PC-9 (cell line): ENCODE measurements at regions of chr4 and their contacts with region 1.

Region 1: GRCh38 chr4:111631215-111631999 is 513.8 kb upstream of the FAM241A start:
- DNase-seq: no peak
- H3K4me3 ChIP-seq: no peak overlapping the region
- H3K27ac ChIP-seq: no peak overlapping the region
- H3K4me1 ChIP-seq: no peaks in the 10 kb centered on the region
- H3K27me3 ChIP-seq: no peaks in the 10 kb centered on the region
- CTCF ChIP-seq: peak; percentile 52

Region 2: GRCh38 chr4:110516106-110516922 is 1115.1 kb before region 1 on chr4:
- CTCF ChIA-PET with region 1: no interaction called
- POLR2A ChIA-PET with region 1: no interaction called
- intact Hi-C with region 1: loop called (anchors 5 kb)
- DNase-seq: peak; percentile 64 to 72
- H3K4me3 ChIP-seq: peak overlapping the region; percentile 53; the same call in 1 of the 2 replicates
- H3K27ac ChIP-seq: no peak overlapping the region
- H3K4me1 ChIP-seq: no peaks in the 10 kb centered on the region
- H3K27me3 ChIP-seq: no peaks in the 10 kb centered on the region
- CTCF ChIP-seq: peak; percentile 78

Region 3: DNA sequence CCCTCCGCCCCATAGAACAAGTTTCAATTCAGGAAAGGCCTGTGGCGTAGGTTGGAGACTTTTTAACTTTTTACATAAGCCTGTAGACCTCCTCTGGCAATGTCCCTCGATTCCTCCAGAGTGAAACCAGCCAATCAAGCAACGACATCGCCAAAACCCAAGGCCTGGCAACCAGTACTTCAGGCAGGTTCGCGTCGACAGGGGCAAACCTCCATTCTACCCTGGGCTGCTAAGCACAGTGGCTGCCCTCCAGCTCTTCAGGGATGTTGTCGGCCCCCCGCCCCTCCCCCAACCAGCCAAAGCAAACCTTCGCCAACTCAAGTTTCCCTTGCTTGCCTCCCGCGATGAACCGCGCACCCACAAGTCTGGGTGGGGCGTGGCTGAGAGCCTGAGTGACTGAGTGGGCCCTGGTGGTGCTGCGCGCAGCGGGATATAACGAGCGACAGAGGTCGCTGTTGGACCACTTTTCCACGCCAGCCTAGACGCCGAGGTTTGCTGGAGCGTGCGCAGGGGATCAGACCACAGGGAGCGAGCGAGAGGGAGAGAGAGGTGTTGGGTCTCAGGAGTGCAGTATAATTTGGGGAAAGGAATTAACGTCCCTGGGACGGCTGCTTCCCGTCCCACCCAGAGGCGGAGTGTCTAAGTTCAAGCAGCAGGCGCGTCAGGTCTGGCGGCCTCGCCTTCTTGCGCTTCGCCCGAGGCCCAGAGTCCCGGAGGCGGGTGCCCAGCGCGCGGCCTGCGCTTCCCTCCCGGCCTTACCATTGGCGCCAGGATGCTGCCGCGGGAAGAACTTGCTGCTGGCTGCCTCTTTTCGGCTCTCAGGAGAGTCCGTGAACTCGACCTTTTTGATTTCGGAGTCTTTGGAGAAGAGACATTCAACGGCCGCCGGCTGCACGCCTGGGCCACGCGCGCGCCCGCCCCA is 999.6 kb before region 1 on chr4:
- CTCF ChIA-PET with region 1: no interaction called
- POLR2A ChIA-PET with region 1: no interaction called
- intact Hi-C with region 1: loop called (anchors 1 kb)
- DNase-seq: peak; percentile 40 to 66
- H3K4me3 ChIP-seq: peak overlapping the region; percentile 42; the same call in 1 of the 2 replicates
- H3K27ac ChIP-seq: no peak overlapping the region
- H3K4me1 ChIP-seq: no peaks in the 10 kb centered on the region
- H3K27me3 ChIP-seq: no peaks in the 10 kb centered on the region
- CTCF ChIP-seq: peak; percentile 77

Region 4: DNA sequence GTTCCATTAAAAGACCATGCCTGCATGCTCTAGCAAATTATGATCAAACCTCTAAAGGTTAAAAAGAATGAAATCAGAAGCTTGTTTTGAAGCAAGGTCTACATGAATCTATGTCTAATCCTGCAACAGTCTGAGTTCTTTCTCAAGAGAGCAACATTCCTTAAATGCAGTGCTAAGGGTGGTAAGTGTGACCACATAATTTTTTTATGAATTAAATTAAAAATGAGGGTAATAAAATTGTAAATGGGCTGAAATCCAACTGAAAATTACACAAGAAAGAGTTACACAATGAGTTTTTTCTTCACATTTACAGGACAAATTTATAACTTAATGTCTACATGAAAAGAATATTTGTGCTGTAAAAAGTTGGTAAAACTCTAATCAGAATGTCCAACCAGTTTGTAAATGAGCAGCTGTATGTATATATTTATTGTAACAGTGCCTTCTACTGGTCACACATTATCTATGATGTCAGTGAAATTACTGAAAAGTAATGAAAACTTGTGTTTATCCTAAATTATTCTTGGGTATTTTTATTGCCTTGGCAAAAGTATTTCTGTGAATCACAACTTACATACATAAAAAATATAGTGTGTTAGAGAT is 672.3 kb before region 1 on chr4:
- CTCF ChIA-PET with region 1: no interaction called
- POLR2A ChIA-PET with region 1: no interaction called
- intact Hi-C with region 1: loop called (anchors 10 kb)
- DNase-seq: no peak
- H3K4me3 ChIP-seq: no peak overlapping the region
- H3K27ac ChIP-seq: no peak overlapping the region
- H3K4me1 ChIP-seq: no peaks in the 10 kb centered on the region
- H3K27me3 ChIP-seq: no peaks in the 10 kb centered on the region
- CTCF ChIP-seq: peak; percentile 43; the same call in 1 of the 2 replicates

Region 5: DNA sequence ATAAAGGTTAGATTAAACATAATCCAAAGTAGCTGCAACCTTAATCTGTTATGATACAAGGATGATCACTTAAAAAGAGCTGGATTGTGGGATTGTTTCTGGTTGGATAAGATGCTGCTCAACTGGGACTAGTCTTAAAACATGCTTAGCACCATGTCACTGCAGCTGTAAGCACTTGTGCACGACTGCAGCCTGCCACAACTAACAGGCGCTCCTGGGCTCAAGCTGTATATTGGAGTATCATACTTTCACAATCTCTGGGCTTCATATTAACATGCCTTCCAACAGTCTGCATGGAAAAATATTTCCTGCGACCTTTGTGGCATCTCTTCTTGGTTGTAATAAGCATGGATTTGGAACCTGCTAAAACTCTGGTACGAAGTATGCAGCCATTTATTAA is 515.5 kb before region 1 on chr4:
- CTCF ChIA-PET with region 1: no interaction called
- POLR2A ChIA-PET with region 1: interaction called, 20 read pairs
- intact Hi-C with region 1: no loop called
- DNase-seq: no peak
- H3K4me3 ChIP-seq: no peak overlapping the region
- H3K27ac ChIP-seq: no peak overlapping the region
- H3K4me1 ChIP-seq: no peaks in the 10 kb centered on the region
- H3K27me3 ChIP-seq: no peaks in the 10 kb centered on the region
- CTCF ChIP-seq: no peak

Region 6: DNA sequence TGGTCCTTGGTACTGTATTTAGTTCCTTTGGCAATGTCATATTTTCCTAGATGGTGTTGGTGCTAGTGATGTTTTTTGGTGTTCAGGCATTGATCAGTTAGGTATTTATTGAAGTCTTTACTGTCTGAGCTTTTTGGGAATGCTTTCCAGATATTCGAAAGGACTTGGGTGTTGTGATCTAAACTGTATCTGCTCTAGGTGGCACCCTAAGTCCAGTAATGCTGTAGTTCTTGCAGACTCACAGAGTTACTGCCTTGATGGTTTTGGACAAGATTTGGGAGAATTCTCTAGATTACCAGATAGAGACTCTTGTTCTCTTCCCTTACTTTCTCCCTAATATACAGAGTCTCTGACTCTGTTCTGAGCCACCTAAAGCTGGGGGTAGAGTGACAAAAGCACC is 495.0 kb before region 1 on chr4:
- CTCF ChIA-PET with region 1: no interaction called
- POLR2A ChIA-PET with region 1: no interaction called
- intact Hi-C with region 1: loop called (anchors 1 kb)
- DNase-seq: no peak
- H3K4me3 ChIP-seq: no peak overlapping the region
- H3K27ac ChIP-seq: no peak overlapping the region
- H3K4me1 ChIP-seq: no peaks in the 10 kb centered on the region
- H3K27me3 ChIP-seq: no peaks in the 10 kb centered on the region
- CTCF ChIP-seq: no peak